ENCODE measurements at regions of chr17 and their contacts with region 1.

Region 1: DNA sequence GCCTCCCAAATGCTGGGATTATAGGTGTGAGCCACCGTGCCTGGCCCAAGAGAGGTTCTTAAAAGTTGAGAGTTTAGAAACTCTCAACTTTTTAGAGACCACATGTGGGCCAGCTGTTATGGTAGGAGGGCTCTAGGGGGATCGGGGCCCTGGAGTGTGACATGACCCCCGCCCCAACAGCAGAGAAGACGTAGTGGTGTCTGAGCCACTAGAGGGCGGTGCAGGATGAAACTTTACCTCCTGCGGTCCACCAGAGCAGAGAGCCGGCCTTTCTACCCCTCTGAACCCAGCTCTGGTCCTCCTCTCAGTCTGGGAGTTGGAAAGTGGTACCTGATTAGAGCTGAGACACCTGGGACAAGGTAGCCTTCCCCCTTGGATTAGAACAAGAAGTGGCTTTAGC is 7.4 kb downstream of the CDK5RAP3 start:
- DNase-seq: peak; percentile 50
- ATAC-seq: peak; percentile 76

Region 2: GRCh38 chr17:47915776-47916398 is 62.4 kb before region 1 on chr17:
- intact Hi-C with region 1: no loop called
- DNase-seq: peak; percentile 78
- ATAC-seq: peak; percentile 74

Region 3: DNA sequence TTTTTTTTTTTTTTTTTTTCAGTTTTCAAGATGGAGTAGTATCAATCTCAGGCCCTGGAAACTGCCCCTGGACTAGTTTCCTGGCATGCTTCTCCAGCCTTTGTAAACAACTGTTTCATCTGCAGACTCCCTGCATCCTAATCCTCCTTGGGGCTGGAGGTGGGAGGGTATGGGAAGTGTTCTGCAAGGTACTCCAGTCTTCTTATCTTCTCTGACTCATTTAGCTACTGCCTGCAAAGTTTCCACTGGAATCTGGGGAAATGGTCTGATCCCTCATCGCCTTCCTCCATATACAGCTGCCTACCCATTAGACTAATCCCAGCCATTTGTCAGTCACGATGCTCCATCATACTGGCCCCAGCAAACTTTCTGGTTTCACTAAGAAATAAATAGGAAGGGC is 37.8 kb after region 1 on chr17:
- intact Hi-C with region 1: loop called (anchors 2 kb)
- DNase-seq: no peak
- ATAC-seq: no peak

Region 4: DNA sequence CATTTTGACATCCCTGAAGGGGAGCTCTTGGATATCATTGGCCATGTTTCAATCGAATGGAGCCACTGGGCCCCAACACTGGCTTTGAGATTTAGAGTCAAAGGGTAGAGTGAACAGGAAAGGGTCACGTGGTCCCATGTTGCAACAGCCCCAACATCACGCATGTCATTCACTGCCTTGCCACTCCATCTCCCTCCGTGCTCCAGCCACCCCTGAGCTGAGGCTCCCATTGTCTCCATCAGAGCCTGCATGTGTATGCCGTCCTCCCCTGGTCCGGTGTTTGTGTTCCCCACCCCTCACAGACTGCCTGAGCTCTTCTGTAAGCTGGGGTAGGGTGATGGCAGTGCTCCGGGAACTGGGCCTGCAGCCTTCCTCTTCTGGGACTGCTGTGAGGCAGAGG is 81.9 kb after region 1 on chr17:
- intact Hi-C with region 1: no loop called
- DNase-seq: no peak
- ATAC-seq: no peak

Region 5: GRCh38 chr17:48131216-48131824 is 153.0 kb after region 1 on chr17:
- intact Hi-C with region 1: no loop called
- DNase-seq: no peak
- ATAC-seq: peak; percentile 93

Measured in Right ventricle myocardium superior (tissue), 1 donor.